ENCODE measurements at regions of chr5 and their contacts with region 1.

Region 1: GRCh38 chr5:173518856-173519255 is 97.6 kb downstream of the BOD1 start:
- DNase-seq: no peak
- H3K4me3 ChIP-seq: no peak overlapping the region
- H3K27ac ChIP-seq: no peak overlapping the region
- H3K4me1 ChIP-seq: peaks cover 0 to 9% (median 0%) of the 10 kb centered on the region in 4 experiments; a peak in 1 of 7 replicates
- H3K27me3 ChIP-seq: no peaks in the 10 kb centered on the region
- CTCF ChIP-seq: no peak
- EP300 ChIP-seq: no peak
- POLR2A ChIP-seq: no peak
- RAD21 ChIP-seq: no peak

Region 2: DNA sequence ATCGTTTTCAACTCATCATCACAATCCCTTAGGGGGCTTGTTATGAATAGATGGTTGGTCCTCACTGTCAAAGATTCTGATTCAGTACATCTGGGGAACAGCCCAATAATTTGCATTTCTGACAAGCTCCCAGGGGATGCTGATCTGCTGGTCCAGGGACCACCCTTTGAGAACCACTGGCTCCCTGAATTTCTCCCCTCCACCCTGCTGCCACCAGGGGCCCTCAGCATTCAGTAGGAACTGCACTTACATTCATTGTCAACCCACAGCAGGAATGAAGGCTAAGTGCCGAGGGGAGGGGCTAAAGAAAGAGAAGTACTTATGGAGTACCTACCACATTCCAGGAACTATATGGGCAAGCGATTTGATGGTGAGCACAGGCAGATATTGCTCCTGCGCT is 11.7 kb after region 1 on chr5:
- CTCF ChIA-PET with region 1: interaction called, 16 read pairs
- POLR2A ChIA-PET with region 1: no interaction called
- DNase-seq: peak; percentile 41 to 56
- H3K4me3 ChIP-seq: no peak overlapping the region
- H3K27ac ChIP-seq: no peak overlapping the region
- H3K4me1 ChIP-seq: no peaks in the 10 kb centered on the region
- H3K27me3 ChIP-seq: no peaks in the 10 kb centered on the region; a peak in 1 of 7 replicates
- CTCF ChIP-seq: peak; percentile 56 to 63 (median 58)
- EP300 ChIP-seq: no peak
- POLR2A ChIP-seq: no peak
- RAD21 ChIP-seq: peak; percentile 53 to 64

Region 3: DNA sequence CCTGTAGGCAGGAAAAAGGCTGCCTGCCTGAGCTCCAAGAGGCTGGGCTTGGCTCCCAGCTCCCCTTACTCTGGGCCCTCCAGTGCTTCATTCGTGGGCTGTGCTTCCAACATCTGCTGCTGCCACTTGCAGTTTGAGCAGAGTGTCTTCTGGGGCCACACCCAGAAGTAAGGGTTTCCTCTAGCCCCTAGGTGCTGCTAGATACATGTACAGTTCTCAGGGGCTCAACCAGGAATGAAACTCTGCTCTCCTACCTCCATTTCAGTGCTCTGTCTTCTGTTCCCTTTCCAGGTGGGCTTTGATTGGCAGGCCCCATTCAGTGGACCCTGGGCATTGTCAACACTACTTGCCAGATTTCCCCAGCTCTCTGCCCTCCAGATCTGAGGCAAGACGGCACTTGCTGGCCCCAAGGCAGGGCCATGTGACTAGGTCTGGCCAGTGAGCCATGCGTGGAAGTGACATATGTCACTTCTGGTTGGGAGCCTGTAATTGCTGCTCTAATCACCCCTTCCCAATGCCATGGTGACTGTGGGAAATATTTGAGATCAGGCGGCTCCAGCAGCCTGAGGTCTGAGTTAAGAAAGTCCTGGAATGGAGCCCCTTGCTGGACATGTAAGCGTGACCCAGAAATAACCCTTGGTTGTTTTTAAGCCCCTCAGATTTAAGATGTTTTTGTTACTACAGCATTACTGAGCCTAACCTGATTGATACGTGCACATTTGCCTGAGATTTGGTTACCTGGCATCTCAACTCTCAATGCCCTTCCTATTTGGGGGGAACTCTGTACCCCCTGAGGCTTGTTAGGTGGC is 107.0 kb after region 1 on chr5:
- CTCF ChIA-PET with region 1: no interaction called
- POLR2A ChIA-PET with region 1: no interaction called
- DNase-seq: no peak
- H3K4me3 ChIP-seq: no peak overlapping the region
- H3K27ac ChIP-seq: no peak overlapping the region
- H3K4me1 ChIP-seq: peaks cover 12 to 18% (median 16%) of the 10 kb centered on the region in 4 experiments
- H3K27me3 ChIP-seq: no peaks in the 10 kb centered on the region
- CTCF ChIP-seq: no peak
- EP300 ChIP-seq: no peak
- POLR2A ChIP-seq: no peak
- RAD21 ChIP-seq: 0 out of 4 replicates have a peak, but pooled peaks have one; percentile 3

Measured in H1 (cell line).